Heart left ventricle (tissue), 16 donors: ENCODE measurements at regions of chr10 and their contacts with region 1.

Region 1: GRCh38 chr10:75091146-75091545 is 20.3 kb upstream of the SAMD8 start:
- DNase-seq: no peak
- ATAC-seq: no peak
- H3K4me3 ChIP-seq: no peak overlapping the region
- H3K27ac ChIP-seq: no peak overlapping the region
- H3K4me1 ChIP-seq: no peaks in the 10 kb centered on the region
- H3K27me3 ChIP-seq: no peaks in the 10 kb centered on the region
- CTCF ChIP-seq: no peak
- POLR2A ChIP-seq: no peak

Region 2: DNA sequence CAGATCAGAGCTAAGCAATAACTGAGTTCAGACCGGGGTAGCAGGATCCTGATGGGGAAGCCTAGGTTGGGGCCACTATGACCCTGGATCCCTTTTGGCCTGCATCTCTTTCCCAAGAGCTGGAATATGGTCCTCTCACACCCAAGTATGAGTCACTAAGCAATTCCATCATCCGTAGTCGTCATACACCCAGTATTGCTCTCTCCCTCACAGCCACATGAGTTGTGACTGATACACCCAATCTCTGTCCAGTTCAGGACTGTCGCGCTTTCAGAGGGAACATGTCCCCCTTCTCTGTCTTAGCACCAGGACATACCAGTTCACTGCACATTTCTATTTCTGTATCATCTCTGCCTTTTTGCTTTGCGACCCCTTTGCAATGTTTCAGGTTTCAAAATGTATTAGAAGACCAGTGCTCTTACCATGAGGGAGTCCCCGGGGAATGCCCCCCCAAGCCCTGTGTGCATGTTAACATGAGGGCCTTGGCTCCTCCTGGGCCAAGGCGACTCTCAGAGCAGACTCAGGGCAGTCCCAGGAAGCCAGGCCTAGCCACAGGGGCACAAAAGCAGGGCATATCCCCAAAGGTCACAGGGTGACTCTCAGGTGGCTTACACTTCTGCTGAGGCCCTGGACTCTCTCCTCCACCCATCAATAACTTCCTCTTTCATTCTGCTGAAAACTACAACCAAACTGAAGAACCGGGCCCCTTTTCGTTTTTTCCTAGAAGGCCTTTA is 55.0 kb before region 1 on chr10:
- intact Hi-C with region 1: loop called in 4 of 10 experiments (anchors 5 to 10 kb)
- DNase-seq: no peak
- ATAC-seq: peak in 1 of 4 donors; percentile 13
- H3K4me3 ChIP-seq: no peak overlapping the region
- H3K27ac ChIP-seq: no peak overlapping the region
- H3K4me1 ChIP-seq: peaks cover 0 to 33% (median 15%) of the 10 kb centered on the region in 12 donors
- H3K27me3 ChIP-seq: no peaks in the 10 kb centered on the region
- CTCF ChIP-seq: no peak
- POLR2A ChIP-seq: no peak